CD4-positive, alpha-beta memory T cell (primary cell): ENCODE measurements at regions of chr16 and their contacts with region 1.

Region 1: GRCh38 chr16:27401768-27402568 is at the start of gene IL21R:
- DNase-seq: peak; percentile 85 to 95 (median 88)
- H3K4me3 ChIP-seq: peak within 1 kb of the TSS; percentile 69 to 98
- H3K4me3 Mint-ChIP-seq: peak within 1 kb of the TSS; percentile 94 to 99 (median 98)
- H3K27ac ChIP-seq: peak within 1 kb of the TSS; percentile 83
- H3K27ac Mint-ChIP-seq: peak within 1 kb of the TSS; percentile 93 to 99 (median 96)
- H3K4me1 ChIP-seq: peaks cover 52% of the 10 kb centered on the region
- H3K4me1 Mint-ChIP-seq: peaks cover 34 to 79% (median 54%) of the 10 kb centered on the region in 4 donors
- H3K27me3 ChIP-seq: no peaks in the 10 kb centered on the region
- H3K27me3 Mint-ChIP-seq: no peaks in the 10 kb centered on the region
- total RNA-seq, gene IL21R: 28.3 to 29.1 TPM

Region 2: GRCh38 chr16:27313422-27314160 is 88.4 kb before region 1 on chr16 and contains the start of gene IL4R:
- CTCF ChIA-PET with region 1: interaction called, 3 read pairs
- POLR2A ChIA-PET with region 1: interaction called, 5 read pairs
- intact Hi-C with region 1: loop called (anchors 2 kb)
- DNase-seq: peak; percentile 66 to 77 (median 69)
- H3K4me3 ChIP-seq: peak within 1 kb of the TSS; percentile 76 to 92
- H3K4me3 Mint-ChIP-seq: peak within 1 kb of the TSS; percentile 89 to 98 (median 94)
- H3K27ac ChIP-seq: peak within 1 kb of the TSS; percentile 96
- H3K27ac Mint-ChIP-seq: peak within 1 kb of the TSS; percentile 94 to 99 (median 99)
- H3K4me1 ChIP-seq: peaks cover 47% of the 10 kb centered on the region
- H3K4me1 Mint-ChIP-seq: peaks cover 30 to 53% (median 42%) of the 10 kb centered on the region in 4 donors
- H3K27me3 ChIP-seq: no peaks in the 10 kb centered on the region
- H3K27me3 Mint-ChIP-seq: no peaks in the 10 kb centered on the region
- total RNA-seq, gene IL4R: 143 to 152 TPM

Region 3: GRCh38 chr16:27387724-27388123 is 14.2 kb before region 1 on chr16:
- CTCF ChIA-PET with region 1: interaction called, 4 read pairs
- POLR2A ChIA-PET with region 1: interaction called, 10 read pairs
- intact Hi-C with region 1: no loop called
- DNase-seq: no peak
- H3K4me3 ChIP-seq: no peak overlapping the region
- H3K4me3 Mint-ChIP-seq: no peak overlapping the region
- H3K27ac ChIP-seq: no peak overlapping the region
- H3K27ac Mint-ChIP-seq: no peak overlapping the region
- H3K4me1 ChIP-seq: no peaks in the 10 kb centered on the region
- H3K4me1 Mint-ChIP-seq: peaks cover 0 to 4% (median under 1%) of the 10 kb centered on the region in 4 donors
- H3K27me3 ChIP-seq: no peaks in the 10 kb centered on the region
- H3K27me3 Mint-ChIP-seq: peaks cover 0 to 1% of the 10 kb centered on the region in 2 donors

Region 4: DNA sequence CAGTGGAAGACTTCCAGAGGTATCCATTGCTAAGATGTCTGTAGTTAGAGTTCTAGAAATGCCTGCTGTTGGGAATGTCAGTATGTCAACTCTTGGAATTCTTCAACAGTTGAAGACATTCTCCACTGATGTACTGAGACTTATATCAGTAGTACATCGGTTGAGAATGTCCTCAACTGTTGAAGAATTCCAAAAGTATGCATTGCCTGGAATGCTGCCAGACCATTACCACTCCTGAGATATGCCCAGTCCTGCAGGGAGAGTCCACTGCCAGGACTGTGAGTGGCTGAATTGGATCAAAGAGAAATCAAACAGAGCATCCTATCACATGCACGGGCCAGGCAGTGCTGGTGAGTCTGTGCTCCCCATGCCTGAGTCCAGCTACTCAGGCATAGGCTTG is 42.0 kb after region 1 on chr16:
- CTCF ChIA-PET with region 1: interaction called, 5 read pairs
- POLR2A ChIA-PET with region 1: interaction called, 26 read pairs
- intact Hi-C with region 1: loop called (anchors 1 kb)
- DNase-seq: no peak
- H3K4me3 ChIP-seq: no peak overlapping the region
- H3K4me3 Mint-ChIP-seq: no peak overlapping the region
- H3K27ac ChIP-seq: no peak overlapping the region
- H3K27ac Mint-ChIP-seq: peak overlapping the region in 3 of 7 donors; percentile 18 to 60 (median 57)
- H3K4me1 ChIP-seq: peaks cover 38% of the 10 kb centered on the region
- H3K4me1 Mint-ChIP-seq: peaks cover 24 to 53% (median 35%) of the 10 kb centered on the region in 4 donors
- H3K27me3 ChIP-seq: no peaks in the 10 kb centered on the region
- H3K27me3 Mint-ChIP-seq: no peaks in the 10 kb centered on the region

Region 5: GRCh38 chr16:27455700-27456099 is 53.7 kb after region 1 on chr16:
- CTCF ChIA-PET with region 1: interaction called, 4 read pairs
- POLR2A ChIA-PET with region 1: interaction called, 12 read pairs
- intact Hi-C with region 1: loop called (anchors 2 kb)
- DNase-seq: peak in 3 of 5 donors; percentile 9 to 55 (median 27)
- H3K4me3 ChIP-seq: no peak overlapping the region
- H3K4me3 Mint-ChIP-seq: peak overlapping the region in 3 of 8 donors; percentile 12 to 41 (median 26)
- H3K27ac ChIP-seq: no peak overlapping the region
- H3K27ac Mint-ChIP-seq: peak overlapping the region in 6 of 7 donors; percentile 58 to 93 (median 68)
- H3K4me1 ChIP-seq: peaks cover 55% of the 10 kb centered on the region
- H3K4me1 Mint-ChIP-seq: peaks cover 26 to 69% (median 54%) of the 10 kb centered on the region in 4 donors
- H3K27me3 ChIP-seq: no peaks in the 10 kb centered on the region
- H3K27me3 Mint-ChIP-seq: no peaks in the 10 kb centered on the region